ENCODE measurements at regions of chr10 and their contacts with region 1.

Region 1: DNA sequence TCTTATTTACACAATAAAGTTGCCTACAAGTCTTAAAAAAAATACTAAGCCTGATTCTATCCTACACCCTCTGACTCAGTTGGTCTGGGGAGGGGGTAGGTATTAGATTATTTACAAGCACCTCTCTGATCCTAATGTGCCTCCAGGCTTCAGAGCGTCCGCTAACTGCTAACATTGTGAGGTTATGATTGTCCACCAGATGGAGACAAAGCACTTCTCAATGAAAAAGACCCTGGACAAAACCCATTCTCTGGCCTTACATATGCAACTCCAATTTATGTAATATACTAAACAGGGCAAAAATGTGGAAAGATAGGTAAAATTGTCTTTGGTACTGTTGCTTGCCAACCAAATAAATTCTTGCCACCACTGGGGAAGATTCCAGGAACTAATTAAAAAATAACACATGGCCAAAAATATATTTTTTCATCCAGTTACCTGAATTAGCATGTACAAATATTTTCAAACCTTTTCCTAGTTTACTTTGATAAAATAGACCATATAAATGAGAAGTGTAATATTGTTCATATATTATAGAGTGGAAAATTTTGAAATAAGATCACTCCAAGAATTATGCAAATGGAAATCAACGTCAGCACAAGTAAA is 92.4 kb downstream of the KIF20B start:
- DNase-seq: peak; percentile 46
- ATAC-seq: peak; percentile 76
- H3K4me3 Mint-ChIP-seq: no peak overlapping the region
- H3K27ac Mint-ChIP-seq: no peak overlapping the region
- H3K4me1 Mint-ChIP-seq: no peaks in the 10 kb centered on the region
- H3K27me3 Mint-ChIP-seq: peaks cover 12% of the 10 kb centered on the region
- CTCF ChIP-seq: peak; percentile 80

Region 2: DNA sequence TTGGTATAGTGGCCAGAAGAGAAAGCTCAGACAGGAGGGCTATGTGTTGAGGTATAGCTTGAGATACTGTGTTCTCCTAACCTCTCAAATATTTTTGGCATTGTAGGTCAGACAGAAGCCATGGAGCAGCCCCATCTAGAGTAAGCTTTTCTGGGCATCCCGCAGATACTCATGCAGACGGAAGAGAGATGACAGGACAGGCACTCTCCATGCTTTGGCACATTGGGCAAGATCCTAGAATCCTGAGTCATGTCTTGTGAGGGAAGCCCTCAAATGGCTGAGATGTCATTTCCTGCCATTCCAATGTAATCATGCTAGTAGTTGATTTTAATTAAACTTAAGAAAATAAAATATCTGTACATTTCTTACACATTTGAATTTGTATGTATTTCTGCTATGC is 109.1 kb before region 1 on chr10:
- CTCF ChIA-PET with region 1: no interaction called
- POLR2A ChIA-PET with region 1: no interaction called
- intact Hi-C with region 1: no loop called
- DNase-seq: no peak
- ATAC-seq: no peak
- H3K4me3 Mint-ChIP-seq: no peak overlapping the region
- H3K27ac Mint-ChIP-seq: no peak overlapping the region
- H3K4me1 Mint-ChIP-seq: peaks cover 3% of the 10 kb centered on the region
- H3K27me3 Mint-ChIP-seq: peaks cover 16% of the 10 kb centered on the region
- CTCF ChIP-seq: no peak

Region 3: GRCh38 chr10:89744026-89744425 is 49.7 kb before region 1 on chr10:
- CTCF ChIA-PET with region 1: no interaction called
- POLR2A ChIA-PET with region 1: no interaction called
- intact Hi-C with region 1: no loop called
- DNase-seq: no peak
- ATAC-seq: no peak
- H3K4me3 Mint-ChIP-seq: no peak overlapping the region
- H3K27ac Mint-ChIP-seq: no peak overlapping the region
- H3K4me1 Mint-ChIP-seq: no peaks in the 10 kb centered on the region
- H3K27me3 Mint-ChIP-seq: no peaks in the 10 kb centered on the region
- CTCF ChIP-seq: no peak

Region 4: GRCh38 chr10:89845541-89846277 is 52.0 kb after region 1 on chr10:
- CTCF ChIA-PET with region 1: no interaction called
- POLR2A ChIA-PET with region 1: no interaction called
- intact Hi-C with region 1: no loop called
- DNase-seq: no peak
- ATAC-seq: no peak
- H3K4me3 Mint-ChIP-seq: no peak overlapping the region
- H3K27ac Mint-ChIP-seq: no peak overlapping the region
- H3K4me1 Mint-ChIP-seq: no peaks in the 10 kb centered on the region
- H3K27me3 Mint-ChIP-seq: peaks cover 13% of the 10 kb centered on the region
- CTCF ChIP-seq: no peak

Region 5: GRCh38 chr10:89954787-89955566 is 161.2 kb after region 1 on chr10:
- CTCF ChIA-PET with region 1: interaction called, 4 read pairs
- POLR2A ChIA-PET with region 1: no interaction called
- intact Hi-C with region 1: loop called (anchors 10 kb)
- DNase-seq: no peak
- ATAC-seq: no peak
- H3K4me3 Mint-ChIP-seq: no peak overlapping the region
- H3K27ac Mint-ChIP-seq: no peak overlapping the region
- H3K4me1 Mint-ChIP-seq: no peaks in the 10 kb centered on the region
- H3K27me3 Mint-ChIP-seq: peaks cover 4% of the 10 kb centered on the region
- CTCF ChIP-seq: peak; percentile 50

Region 6: DNA sequence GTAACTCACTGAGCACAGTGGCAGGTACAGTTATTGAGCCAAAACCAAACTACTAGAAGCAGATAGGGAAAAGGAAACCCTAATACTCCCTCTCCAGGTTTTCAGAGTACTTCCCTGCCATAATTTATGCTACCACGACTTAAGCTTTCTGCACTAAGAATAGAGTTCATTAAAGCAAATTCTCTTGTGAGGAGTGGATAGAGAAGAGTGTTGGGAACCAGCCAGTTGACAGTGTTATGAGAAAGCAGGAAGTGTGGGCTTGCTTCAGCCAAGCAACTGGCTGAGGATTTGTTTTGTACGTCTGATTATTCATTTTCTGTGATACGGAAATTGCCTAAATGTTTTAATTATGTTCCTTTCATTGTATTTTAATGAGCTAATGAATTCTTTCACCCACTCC is 188.1 kb after region 1 on chr10:
- CTCF ChIA-PET with region 1: no interaction called
- POLR2A ChIA-PET with region 1: no interaction called
- intact Hi-C with region 1: no loop called
- DNase-seq: no peak
- ATAC-seq: no peak
- H3K4me3 Mint-ChIP-seq: no peak overlapping the region
- H3K27ac Mint-ChIP-seq: no peak overlapping the region
- H3K4me1 Mint-ChIP-seq: no peaks in the 10 kb centered on the region
- H3K27me3 Mint-ChIP-seq: peaks cover 1% of the 10 kb centered on the region
- CTCF ChIP-seq: no peak

Region 7: GRCh38 chr10:90138844-90139243 is 345.1 kb after region 1 on chr10:
- CTCF ChIA-PET with region 1: interaction called, 3 read pairs
- POLR2A ChIA-PET with region 1: no interaction called
- intact Hi-C with region 1: loop called (anchors 2 kb)
- DNase-seq: no peak
- ATAC-seq: no peak
- H3K4me3 Mint-ChIP-seq: no peak overlapping the region
- H3K27ac Mint-ChIP-seq: no peak overlapping the region
- H3K4me1 Mint-ChIP-seq: no peaks in the 10 kb centered on the region
- H3K27me3 Mint-ChIP-seq: no peaks in the 10 kb centered on the region
- CTCF ChIP-seq: peak; percentile 62

Region 8: GRCh38 chr10:90862908-90863514 is 1069.3 kb after region 1 on chr10:
- CTCF ChIA-PET with region 1: no interaction called
- POLR2A ChIA-PET with region 1: no interaction called
- intact Hi-C with region 1: loop called (anchors 5 kb)
- DNase-seq: no peak
- ATAC-seq: no peak
- H3K4me3 Mint-ChIP-seq: no peak overlapping the region
- H3K27ac Mint-ChIP-seq: no peak overlapping the region
- H3K4me1 Mint-ChIP-seq: peaks cover 9% of the 10 kb centered on the region
- H3K27me3 Mint-ChIP-seq: peaks cover 50% of the 10 kb centered on the region
- CTCF ChIP-seq: peak; percentile 73